Activated CD4-positive, alpha-beta T cell treated with anti-CD3 and anti-CD28 coated beads for 36 hours (primary cell): ENCODE measurements at regions of chr12 and their contacts with region 1.

Region 1: GRCh38 chr12:113965951-113966797 is at the start of gene RBM19:
- DNase-seq: peak; percentile 98
- ATAC-seq: peak; percentile 76
- H3K4me3 Mint-ChIP-seq: peak within 1 kb of the TSS; percentile 99
- H3K27ac Mint-ChIP-seq: peak within 1 kb of the TSS; percentile 99
- H3K4me1 Mint-ChIP-seq: peaks cover 50% of the 10 kb centered on the region
- H3K27me3 Mint-ChIP-seq: no peaks in the 10 kb centered on the region
- total RNA-seq, gene RBM19: 79.6 to 93.5 TPM

Region 2: DNA sequence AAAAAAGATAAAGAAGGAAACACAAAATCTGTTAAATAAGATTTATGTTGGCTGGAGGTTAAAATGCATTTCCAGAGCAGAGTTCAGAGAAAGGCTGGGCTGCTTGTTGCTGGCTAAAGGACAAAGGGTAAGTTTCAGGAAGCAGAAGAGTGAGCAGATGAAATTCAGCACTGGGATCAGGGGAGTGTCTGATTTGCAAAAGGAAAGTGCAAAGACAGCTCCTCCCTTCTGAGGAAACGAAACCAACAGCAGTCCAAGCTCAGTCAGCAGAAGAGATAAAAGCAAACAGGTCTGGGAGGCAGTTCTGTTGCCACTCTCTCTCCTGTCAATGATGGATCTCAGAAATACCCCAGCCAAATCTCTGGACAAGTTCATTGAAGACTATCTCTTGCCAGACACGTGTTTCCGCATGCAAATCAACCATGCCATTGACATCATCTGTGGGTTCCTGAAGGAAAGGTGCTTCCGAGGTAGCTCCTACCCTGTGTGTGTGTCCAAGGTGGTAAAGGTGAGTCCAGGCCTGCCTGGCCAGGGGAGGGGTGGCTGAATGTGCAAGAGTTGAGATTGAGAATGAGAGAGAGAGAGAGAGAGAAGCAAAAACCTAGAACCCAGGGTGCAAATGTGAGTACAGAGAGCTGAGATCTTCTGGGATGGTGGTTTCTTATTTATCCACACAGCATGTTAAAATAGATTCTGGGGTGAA is 1059.3 kb before region 1 on chr12 and contains the start of gene OAS1:
- CTCF ChIA-PET with region 1: no interaction called
- POLR2A ChIA-PET with region 1: no interaction called
- intact Hi-C with region 1: loop called in 1 of 2 experiments (anchors 10 kb)
- DNase-seq: peak; percentile 55
- ATAC-seq: peak; percentile 85
- H3K4me3 Mint-ChIP-seq: peak within 1 kb of the TSS; percentile 85
- H3K27ac Mint-ChIP-seq: peak within 1 kb of the TSS; percentile 95
- H3K4me1 Mint-ChIP-seq: peaks cover 56% of the 10 kb centered on the region
- H3K27me3 Mint-ChIP-seq: no peaks in the 10 kb centered on the region
- total RNA-seq, gene OAS1: 50.5 to 52.8 TPM

Region 3: DNA sequence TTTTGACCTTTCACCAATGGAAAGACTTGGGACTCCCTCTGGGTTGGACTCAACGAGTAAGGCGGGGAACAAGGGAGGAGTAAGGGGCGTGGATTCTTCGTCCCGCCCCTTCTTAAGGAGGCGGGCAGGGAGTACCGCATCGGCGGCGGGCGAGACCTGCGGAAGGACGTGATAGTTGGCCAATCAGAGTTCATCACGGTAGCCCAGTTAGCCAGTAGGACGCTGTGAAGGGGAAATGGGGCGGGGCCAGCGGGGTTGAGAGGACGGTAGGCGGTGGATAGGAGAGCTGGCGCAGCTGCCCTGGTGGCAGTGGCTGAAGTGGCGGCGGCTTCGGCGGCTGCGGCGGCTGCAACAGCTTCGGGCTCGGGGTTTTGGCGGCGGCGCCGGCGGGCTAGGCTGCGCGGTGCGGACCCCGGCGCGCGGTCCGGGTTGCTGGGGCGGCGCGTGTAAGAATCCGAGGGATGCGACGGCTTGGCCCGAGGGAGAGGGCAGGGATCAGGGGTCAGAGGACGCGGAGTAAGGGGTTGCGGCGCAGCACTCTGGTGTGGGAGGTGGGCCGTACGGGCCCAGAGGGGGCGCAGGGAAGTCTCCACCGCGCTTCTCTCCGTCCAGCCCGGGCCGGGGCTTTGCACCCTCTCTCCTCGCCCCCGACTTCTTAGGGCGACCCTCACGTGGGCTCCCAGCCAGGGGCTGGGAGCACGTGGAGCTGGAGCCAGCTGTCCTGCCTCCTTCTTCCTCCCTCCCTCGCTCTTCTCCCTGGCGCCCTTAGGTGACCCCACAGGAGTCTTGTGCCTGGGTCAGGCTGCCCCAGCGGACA is 744.8 kb before region 1 on chr12 and contains the start of gene TPCN1:
- CTCF ChIA-PET with region 1: no interaction called
- POLR2A ChIA-PET with region 1: no interaction called
- intact Hi-C with region 1: loop called (anchors 1 to 5 kb)
- DNase-seq: peak; percentile 100
- ATAC-seq: peak; percentile 95
- H3K4me3 Mint-ChIP-seq: peak within 1 kb of the TSS; percentile 94
- H3K27ac Mint-ChIP-seq: peak within 1 kb of the TSS; percentile 91
- H3K4me1 Mint-ChIP-seq: peaks cover 34% of the 10 kb centered on the region
- H3K27me3 Mint-ChIP-seq: no peaks in the 10 kb centered on the region
- total RNA-seq, gene TPCN1: 35.5 to 37.0 TPM

Region 4: GRCh38 chr12:113358381-113359132 is 607.6 kb before region 1 on chr12 and contains the start of gene PLBD2:
- CTCF ChIA-PET with region 1: no interaction called
- POLR2A ChIA-PET with region 1: no interaction called
- intact Hi-C with region 1: loop called in 1 of 2 experiments (anchors 2 kb)
- DNase-seq: peak; percentile 98
- ATAC-seq: peak; percentile 98
- H3K4me3 Mint-ChIP-seq: peak within 1 kb of the TSS; percentile 84
- H3K27ac Mint-ChIP-seq: peak within 1 kb of the TSS; percentile 86
- H3K4me1 Mint-ChIP-seq: peaks cover 22% of the 10 kb centered on the region
- H3K27me3 Mint-ChIP-seq: no peaks in the 10 kb centered on the region
- total RNA-seq, gene PLBD2: 13.7 to 17.3 TPM

Region 5: DNA sequence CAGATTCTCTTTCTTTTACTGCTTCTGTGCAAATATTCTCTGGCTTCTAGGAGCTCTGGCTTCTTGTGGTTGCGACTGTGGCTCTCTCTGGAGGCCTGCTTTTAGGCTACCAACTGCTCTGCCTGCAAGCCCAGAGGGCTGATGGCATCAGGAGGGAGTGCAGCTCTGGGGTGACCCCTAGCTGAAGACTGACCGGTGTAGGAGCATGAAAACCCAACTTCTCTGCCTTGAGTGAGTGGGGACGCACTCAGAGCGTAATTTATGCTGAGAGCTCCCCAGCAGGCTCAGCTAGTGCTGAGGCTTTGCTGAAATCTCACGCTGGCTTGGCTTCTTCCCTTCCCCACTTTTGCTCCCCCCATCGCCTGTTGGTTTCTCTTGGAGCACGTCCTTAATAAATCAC is 29.9 kb after region 1 on chr12:
- CTCF ChIA-PET with region 1: no interaction called
- POLR2A ChIA-PET with region 1: no interaction called
- intact Hi-C with region 1: no loop called
- DNase-seq: no peak
- ATAC-seq: no peak
- H3K4me3 Mint-ChIP-seq: no peak overlapping the region
- H3K27ac Mint-ChIP-seq: no peak overlapping the region
- H3K4me1 Mint-ChIP-seq: no peaks in the 10 kb centered on the region
- H3K27me3 Mint-ChIP-seq: peaks cover 21% of the 10 kb centered on the region

Region 6: DNA sequence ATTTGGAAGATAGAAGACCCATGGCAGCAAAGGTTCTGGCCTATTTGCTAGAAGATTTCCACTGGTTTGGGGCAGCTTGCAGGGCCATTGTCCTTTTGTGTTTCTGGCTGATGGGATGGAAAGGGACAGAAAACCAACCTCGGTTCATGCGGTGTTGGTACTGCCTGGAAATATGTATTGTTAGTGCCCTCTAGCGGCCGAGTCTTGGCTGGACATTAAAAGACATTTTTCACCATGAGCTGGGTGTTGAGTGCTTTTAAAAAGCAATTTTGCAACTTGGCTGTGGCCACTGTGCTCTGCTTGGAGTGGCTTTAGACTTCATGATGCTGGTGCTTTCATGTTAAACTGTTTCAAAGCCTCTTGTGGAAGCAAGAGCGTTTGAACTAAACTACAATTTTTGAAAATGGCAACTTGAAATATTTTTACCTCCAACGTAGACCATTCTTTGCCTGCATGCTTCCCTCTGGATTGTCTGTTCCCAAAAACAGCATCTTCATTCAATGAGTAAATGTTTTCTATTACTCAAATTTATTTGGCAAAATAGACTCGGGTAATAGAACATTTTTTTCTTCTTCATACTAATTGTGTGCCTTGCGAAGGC is 542.5 kb after region 1 on chr12:
- CTCF ChIA-PET with region 1: interaction called, 9 read pairs
- POLR2A ChIA-PET with region 1: no interaction called
- intact Hi-C with region 1: loop called (anchors 1 kb)
- DNase-seq: peak; percentile 79
- ATAC-seq: peak; percentile 49
- H3K4me3 Mint-ChIP-seq: no peak overlapping the region
- H3K27ac Mint-ChIP-seq: no peak overlapping the region
- H3K4me1 Mint-ChIP-seq: peaks cover 3% of the 10 kb centered on the region
- H3K27me3 Mint-ChIP-seq: peaks cover 21% of the 10 kb centered on the region